Stomach (tissue), 19 donors: ENCODE measurements at regions of chr7 and their contacts with region 1.

Region 1: DNA sequence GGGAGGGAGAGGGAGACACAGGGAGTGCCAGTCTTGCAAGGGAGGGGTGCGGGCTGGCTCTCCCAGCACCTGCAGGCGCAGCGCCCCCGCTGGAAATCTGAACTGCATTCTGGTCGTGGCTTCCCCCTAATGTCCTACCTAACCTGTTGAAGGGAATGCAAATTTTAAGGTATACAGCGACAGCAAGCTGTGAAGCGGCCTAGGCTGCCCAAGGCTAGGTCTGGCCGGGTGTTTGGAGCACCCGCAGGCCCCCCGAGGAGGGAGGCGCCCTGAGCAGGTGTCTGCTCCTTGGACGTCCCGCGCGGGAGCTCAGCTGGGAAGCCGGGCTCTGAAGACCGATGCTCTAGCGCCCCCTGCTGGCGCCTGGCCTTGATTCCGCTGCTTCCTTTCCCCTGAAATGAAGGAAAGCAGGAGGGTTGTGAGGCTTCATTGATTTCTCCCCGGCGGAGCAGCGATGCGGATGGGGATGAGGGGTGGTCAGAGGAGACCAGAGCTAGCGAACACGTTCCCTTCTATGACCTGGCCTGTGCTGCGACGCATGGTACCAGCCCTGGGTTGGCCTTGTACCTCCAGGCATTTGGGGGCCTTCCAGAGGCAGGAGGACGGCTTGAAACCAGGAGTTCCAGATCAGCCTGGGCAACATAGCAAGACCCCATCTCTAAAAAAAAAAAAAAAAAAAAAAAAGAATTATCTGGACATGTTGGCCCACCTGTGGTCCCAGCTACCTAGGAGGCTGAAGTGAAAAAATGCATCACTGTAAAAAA is 601.3 kb downstream of the GALNT17 start:
- DNase-seq: peak; percentile 83 to 93
- H3K4me3 ChIP-seq: peak overlapping the region in 1 of 4 donors; percentile 15
- H3K27ac ChIP-seq: no peak overlapping the region
- H3K4me1 ChIP-seq: peaks cover 0 to 7% (median 3%) of the 10 kb centered on the region in 4 donors
- H3K27me3 ChIP-seq: peaks cover 0 to 10% (median 0%) of the 10 kb centered on the region in 3 donors
- CTCF ChIP-seq: peak in 5 of 7 experiments; percentile 69 to 84 (median 81)
- EP300 ChIP-seq: no peak
- POLR2A ChIP-seq: no peak

Region 2: GRCh38 chr7:70829221-70830059 is 903.8 kb before region 1 on chr7:
- intact Hi-C with region 1: loop called (anchors 10 kb)
- DNase-seq: peak; percentile 62 to 85
- H3K4me3 ChIP-seq: peak overlapping the region in 1 of 4 donors; percentile 39
- H3K27ac ChIP-seq: no peak overlapping the region
- H3K4me1 ChIP-seq: peaks cover 0 to 14% (median 8%) of the 10 kb centered on the region in 4 donors
- H3K27me3 ChIP-seq: peaks cover 0 to 21% (median 7%) of the 10 kb centered on the region in 3 donors
- CTCF ChIP-seq: peak in 5 of 7 experiments; percentile 64 to 95 (median 85)
- EP300 ChIP-seq: no peak
- POLR2A ChIP-seq: no peak

Region 3: DNA sequence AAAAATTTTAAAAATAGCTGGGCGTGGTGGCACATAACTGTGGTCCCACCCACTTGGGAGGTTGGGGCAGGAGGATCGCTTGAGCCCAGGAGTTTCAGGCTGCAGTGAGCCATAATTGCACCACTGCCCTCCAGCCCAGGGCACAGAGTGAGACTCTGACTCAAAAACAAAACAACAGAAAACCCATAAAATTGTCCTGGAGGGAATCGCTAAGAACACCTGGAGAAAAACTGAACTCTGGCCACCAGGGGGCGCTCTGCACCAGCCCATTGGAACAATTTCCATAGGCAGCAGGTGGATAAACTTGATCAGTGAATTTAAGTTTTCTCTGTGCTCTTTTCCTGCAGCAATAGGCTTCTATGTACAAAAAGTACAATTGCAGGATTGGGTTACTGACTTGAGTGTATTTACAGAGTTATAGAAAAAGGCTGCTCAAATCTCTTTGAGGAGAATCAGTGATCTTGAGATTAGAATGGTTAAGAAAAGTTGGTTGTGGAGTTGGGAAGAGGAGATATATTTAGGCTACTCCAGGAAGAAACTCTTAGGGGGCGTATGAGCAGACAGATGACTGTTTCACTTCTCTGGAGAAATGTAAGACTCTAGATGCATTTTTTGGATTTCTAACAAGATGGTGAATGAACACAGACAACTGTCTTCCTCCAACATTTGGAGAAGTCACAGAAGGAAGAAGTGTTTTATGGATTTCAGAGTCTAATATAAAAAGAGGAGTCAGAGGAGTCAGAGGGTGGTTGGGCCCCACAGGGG is 876.2 kb before region 1 on chr7:
- intact Hi-C with region 1: loop called (anchors 5 kb)
- DNase-seq: peak; percentile 68 to 87
- H3K4me3 ChIP-seq: no peak overlapping the region
- H3K27ac ChIP-seq: no peak overlapping the region
- H3K4me1 ChIP-seq: no peaks in the 10 kb centered on the region
- H3K27me3 ChIP-seq: no peaks in the 10 kb centered on the region
- CTCF ChIP-seq: peak in 5 of 7 experiments; percentile 42 to 94 (median 76)
- EP300 ChIP-seq: no peak
- POLR2A ChIP-seq: no peak

Region 4: DNA sequence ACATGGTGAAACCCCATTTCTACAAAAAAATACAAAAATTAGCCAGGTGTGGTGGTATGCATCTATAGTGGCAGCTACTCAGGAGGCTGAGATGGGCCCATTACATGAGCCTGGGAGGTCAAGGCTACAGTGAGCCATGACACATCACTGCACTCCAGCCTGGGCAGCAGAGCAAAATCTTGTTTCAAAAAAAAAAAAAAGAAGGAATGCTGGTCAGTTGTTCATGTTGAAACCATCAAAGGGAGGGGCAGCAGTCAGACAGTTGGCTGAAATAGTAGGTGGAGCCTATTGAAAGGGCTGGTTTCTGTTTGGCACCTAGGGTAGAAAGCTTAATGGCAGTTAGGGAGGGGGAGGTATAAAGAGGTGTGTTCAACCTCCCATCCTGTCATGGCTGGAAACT is 278.3 kb before region 1 on chr7:
- intact Hi-C with region 1: no loop called
- DNase-seq: no peak
- H3K4me3 ChIP-seq: no peak overlapping the region
- H3K27ac ChIP-seq: no peak overlapping the region
- H3K4me1 ChIP-seq: no peaks in the 10 kb centered on the region
- H3K27me3 ChIP-seq: no peaks in the 10 kb centered on the region
- CTCF ChIP-seq: no peak
- EP300 ChIP-seq: no peak
- POLR2A ChIP-seq: no peak

Region 5: DNA sequence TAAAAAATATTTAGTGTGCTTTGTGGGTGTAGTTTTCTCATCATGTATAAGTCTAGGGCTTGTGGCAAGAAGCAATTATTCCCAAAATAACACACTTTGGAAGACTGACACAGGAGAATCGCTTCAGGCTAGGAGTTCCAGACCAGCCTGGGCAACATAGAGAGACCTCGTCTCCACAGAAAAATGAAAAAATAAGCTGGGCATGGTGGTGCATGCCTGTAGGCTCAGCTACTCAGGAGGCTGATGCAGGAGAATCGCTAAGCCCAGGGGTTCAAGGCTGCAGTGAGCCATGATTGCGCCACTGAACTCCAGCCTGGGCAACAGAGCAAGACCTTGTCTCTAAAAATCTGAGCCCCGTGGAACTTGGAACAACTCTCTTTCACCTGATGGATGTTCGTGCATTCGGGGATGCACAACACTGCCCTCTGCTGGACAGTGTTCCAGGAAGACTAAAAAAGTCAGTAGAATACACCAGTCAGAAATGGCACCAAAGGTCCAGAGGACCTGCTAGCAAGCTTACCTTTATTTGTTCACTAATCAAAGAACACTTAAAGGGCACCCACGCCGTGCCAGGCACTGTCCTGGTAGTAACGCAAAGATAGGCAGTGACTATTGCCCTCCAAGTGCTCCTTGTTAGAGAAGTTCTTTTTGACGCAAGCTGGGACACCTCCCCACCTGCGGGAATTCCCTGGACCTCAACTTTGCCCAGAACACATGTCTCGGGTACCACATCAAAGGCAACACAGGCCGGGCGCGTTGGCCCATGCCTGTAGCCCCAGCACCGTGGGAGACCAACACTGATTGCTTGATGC is 760.8 kb after region 1 on chr7:
- intact Hi-C with region 1: no loop called
- DNase-seq: peak; percentile 81 to 84
- H3K4me3 ChIP-seq: no peak overlapping the region
- H3K27ac ChIP-seq: no peak overlapping the region
- H3K4me1 ChIP-seq: no peaks in the 10 kb centered on the region
- H3K27me3 ChIP-seq: no peaks in the 10 kb centered on the region
- CTCF ChIP-seq: peak in 5 of 7 experiments; percentile 21 to 63 (median 52)
- EP300 ChIP-seq: no peak
- POLR2A ChIP-seq: no peak